HEK293 (cell line): ENCODE measurements at regions of chr12 and their contacts with region 1.

Region 1: GRCh38 chr12:52069327-52070184 is at the start of gene ATG101:
- H3K4me3 ChIP-seq: peak within 1 kb of the TSS; percentile 87
- H3K27ac ChIP-seq: peak within 1 kb of the TSS; percentile 92
- H3K4me1 ChIP-seq: 0 out of 2 replicates have a peak, but pooled peaks cover 7% of the 10 kb centered on the region
- CTCF ChIP-seq: peak; percentile 98

Region 2: DNA sequence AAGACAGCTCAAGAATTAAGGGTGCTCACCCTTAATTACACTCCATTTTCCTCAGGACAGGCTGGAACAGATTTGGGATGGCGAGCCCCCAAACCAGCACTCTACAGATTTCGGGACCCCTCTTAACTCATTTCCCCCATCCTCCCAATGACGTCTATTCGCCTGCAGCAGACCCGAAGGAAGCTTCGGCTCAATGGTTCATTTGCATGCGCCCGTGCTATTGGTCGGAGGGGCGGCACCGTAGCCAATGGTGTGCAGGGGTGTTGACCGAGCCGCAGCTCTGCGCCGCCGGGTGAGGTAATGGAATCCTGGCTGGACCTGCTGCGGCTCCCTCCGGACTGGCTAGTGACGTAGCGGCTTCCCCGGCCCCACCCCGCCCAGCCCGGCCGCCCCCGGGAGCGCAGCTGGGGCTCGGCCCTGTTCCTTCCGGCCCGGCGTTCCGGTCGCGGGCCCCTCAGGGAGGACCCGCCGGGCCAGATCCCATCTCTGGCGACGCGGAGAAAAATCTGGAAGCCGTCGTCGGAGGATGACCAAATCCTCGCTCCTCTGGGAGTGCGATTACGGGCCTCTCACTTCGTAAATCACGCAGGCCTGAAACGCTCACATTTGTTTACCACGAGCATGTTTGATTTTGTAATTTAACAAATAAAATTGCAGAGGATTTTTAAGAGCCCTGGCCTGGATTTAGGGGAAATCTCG is 36.6 kb before region 1 on chr12:
- CTCF ChIA-PET with region 1: interaction called, 794 read pairs
- POLR2A ChIA-PET with region 1: interaction called, 16 read pairs
- H3K4me3 ChIP-seq: 0 out of 2 replicates have a peak overlapping the region, but pooled peaks have one; percentile 9
- H3K27ac ChIP-seq: no peak overlapping the region; the same call in 1 of the 2 replicates
- H3K4me1 ChIP-seq: peaks cover 13% of the 10 kb centered on the region
- CTCF ChIP-seq: no peak

Region 3: GRCh38 chr12:52050761-52051541 is 18.6 kb before region 1 on chr12 and contains the start of gene NR4A1:
- CTCF ChIA-PET with region 1: interaction called, 3 read pairs
- POLR2A ChIA-PET with region 1: interaction called, 11 read pairs
- H3K4me3 ChIP-seq: peak within 1 kb of the TSS; percentile 43
- H3K27ac ChIP-seq: peak within 1 kb of the TSS; percentile 30
- H3K4me1 ChIP-seq: peaks cover 11% of the 10 kb centered on the region; the same call in 1 of the 2 replicates
- CTCF ChIP-seq: peak; percentile 84